ENCODE measurements at regions of chr1 and their contacts with region 1.

Region 1: GRCh38 chr1:53860967-53861411 is 22.9 kb upstream of the NDC1 start:
- DNase-seq: no peak
- H3K4me3 ChIP-seq: no peak overlapping the region
- H3K27me3 ChIP-seq: no peaks in the 10 kb centered on the region
- CTCF ChIP-seq: peak; percentile 83

Region 2: GRCh38 chr1:53847980-53848379 is 13.0 kb before region 1 on chr1:
- CTCF ChIA-PET with region 1: interaction called, 40 read pairs
- POLR2A ChIA-PET with region 1: no interaction called
- DNase-seq: no peak
- H3K4me3 ChIP-seq: no peak overlapping the region
- H3K27me3 ChIP-seq: no peaks in the 10 kb centered on the region
- CTCF ChIP-seq: no peak

Region 3: DNA sequence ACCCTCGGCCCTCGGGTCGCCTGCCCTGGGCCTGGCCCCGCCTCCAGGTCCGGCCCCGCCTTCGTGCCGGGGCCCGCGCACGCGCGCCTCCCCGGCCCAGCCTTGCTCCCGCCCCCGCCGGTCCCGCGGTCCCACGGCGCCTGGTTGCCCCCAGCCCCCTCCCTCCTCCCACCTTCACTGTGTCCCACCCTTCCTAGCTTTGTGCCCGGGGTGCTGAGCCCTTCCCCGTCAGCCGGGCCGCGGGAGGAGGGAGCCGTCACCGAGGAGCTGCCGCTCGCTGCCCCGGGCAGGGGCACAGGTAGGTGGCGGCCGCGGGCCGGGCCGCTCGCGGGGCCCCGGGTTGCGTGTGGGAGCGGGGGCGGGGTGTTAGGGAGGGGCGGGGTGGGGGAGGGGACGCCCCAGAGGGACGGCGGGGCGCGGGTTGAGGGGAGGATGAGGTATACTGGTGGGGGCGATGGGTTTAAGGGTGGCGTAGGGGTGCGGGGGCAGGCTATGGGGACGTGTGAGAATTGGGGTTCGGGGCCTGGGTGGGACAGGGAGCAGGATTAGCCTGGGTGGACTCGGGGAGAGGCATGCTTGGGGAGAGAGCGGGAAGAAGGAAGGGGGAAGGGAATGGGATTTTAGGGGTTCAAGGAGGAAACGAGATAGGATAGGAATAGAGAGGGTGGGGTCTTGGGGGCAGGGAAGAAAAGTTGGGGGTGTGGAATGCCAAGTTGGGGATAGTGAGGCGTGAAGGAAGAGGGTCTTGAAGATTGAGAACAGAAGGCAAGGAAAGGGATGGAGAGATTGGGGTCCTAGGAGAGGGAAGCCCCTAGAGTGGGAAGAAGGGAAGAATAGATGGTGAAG is 85.5 kb after region 1 on chr1 and contains the start of gene LRRC42:
- CTCF ChIA-PET with region 1: interaction called, 30 read pairs
- POLR2A ChIA-PET with region 1: no interaction called
- DNase-seq: no peak
- H3K4me3 ChIP-seq: peak within 1 kb of the TSS; percentile 98
- H3K27me3 ChIP-seq: no peaks in the 10 kb centered on the region
- CTCF ChIP-seq: peak; percentile 23; the same call in 1 of the 2 replicates
- polyA plus RNA-seq, gene LRRC42: 52.9 and 54.6 TPM in 2 replicates

Region 4: DNA sequence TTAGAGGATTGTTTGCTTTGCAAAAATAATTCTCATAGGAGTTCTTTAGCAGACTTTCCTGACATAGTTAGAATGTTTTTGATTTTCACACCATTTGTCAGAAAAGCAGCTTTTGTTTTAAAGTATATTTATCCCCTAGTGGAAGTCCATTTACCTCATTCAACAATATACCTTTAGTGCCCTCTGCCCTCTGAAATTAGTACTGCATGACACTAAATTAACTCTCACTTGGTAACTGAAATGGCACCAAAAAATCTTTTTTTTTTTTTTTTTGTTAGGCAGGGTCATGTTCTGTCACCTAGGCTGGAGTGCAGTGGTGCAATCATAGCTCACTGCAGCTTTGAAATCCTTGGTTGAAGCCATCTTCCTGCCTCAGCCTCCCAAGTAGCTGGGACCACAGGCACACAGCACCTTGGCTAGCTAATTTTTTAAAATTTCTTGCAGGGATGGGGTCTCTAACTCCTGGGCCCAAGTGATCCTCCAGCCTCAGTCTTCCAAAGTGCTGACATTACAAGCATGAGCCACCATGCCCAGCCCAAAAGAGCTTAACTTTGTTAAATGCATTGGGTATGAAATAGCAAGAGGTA is 98.8 kb after region 1 on chr1:
- CTCF ChIA-PET with region 1: interaction called, 26 read pairs
- POLR2A ChIA-PET with region 1: no interaction called
- DNase-seq: no peak
- H3K4me3 ChIP-seq: no peak overlapping the region
- H3K27me3 ChIP-seq: no peaks in the 10 kb centered on the region
- CTCF ChIP-seq: peak; percentile 43